H1 (cell line): ENCODE measurements at regions of chr6 and their contacts with region 1.

Region 1: GRCh38 chr6:117380298-117380697 is 45.4 kb downstream of the ROS1 start:
- DNase-seq: no peak
- H3K4me3 ChIP-seq: no peak overlapping the region
- H3K27ac ChIP-seq: no peak overlapping the region
- H3K4me1 ChIP-seq: no peaks in the 10 kb centered on the region
- H3K27me3 ChIP-seq: no peaks in the 10 kb centered on the region
- CTCF ChIP-seq: no peak
- EP300 ChIP-seq: no peak
- POLR2A ChIP-seq: no peak
- RAD21 ChIP-seq: no peak

Region 2: DNA sequence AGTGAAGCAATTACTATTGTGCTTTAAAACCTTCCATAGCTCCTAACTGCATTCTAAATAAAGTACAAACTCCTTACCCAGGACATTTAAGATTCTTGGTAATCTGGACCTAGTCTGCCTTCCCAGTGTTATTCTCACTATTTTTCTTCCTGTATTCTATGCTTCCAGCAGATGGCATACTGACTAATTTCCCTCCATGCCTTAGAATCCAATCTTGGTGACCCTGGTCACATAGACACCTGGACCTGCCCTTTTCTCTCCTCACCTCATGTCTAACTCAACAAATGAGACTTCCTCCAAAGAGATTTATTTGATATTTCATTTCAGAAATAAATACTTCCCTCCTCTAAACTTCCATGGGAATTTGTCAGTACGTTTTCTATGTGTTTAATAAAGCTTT is 19.6 kb after region 1 on chr6:
- CTCF ChIA-PET with region 1: interaction called, 12 read pairs
- POLR2A ChIA-PET with region 1: no interaction called
- DNase-seq: no peak
- H3K4me3 ChIP-seq: no peak overlapping the region
- H3K27ac ChIP-seq: no peak overlapping the region
- H3K4me1 ChIP-seq: no peaks in the 10 kb centered on the region
- H3K27me3 ChIP-seq: no peaks in the 10 kb centered on the region
- CTCF ChIP-seq: peak in 1 of 3 experiments; percentile 23; a peak in 2 of 4 replicates
- EP300 ChIP-seq: no peak
- POLR2A ChIP-seq: no peak
- RAD21 ChIP-seq: peak in 1 of 2 experiments; percentile 12; a peak in 1 of 4 replicates